ENCODE measurements at regions of chr3 and their contacts with region 1.

Region 1: GRCh38 chr3:10417849-10418248 is 87.5 kb downstream of the ATP2B2 start:
- DNase-seq: no peak
- H3K4me3 ChIP-seq: no peak overlapping the region
- H3K27ac ChIP-seq: no peak overlapping the region
- H3K4me1 ChIP-seq: no peaks in the 10 kb centered on the region
- H3K27me3 ChIP-seq: no peaks in the 10 kb centered on the region
- CTCF ChIP-seq: peak in 2 of 3 experiments; percentile 39 to 41; a peak in 3 of 4 replicates
- EP300 ChIP-seq: no peak
- POLR2A ChIP-seq: no peak
- RAD21 ChIP-seq: peak; percentile 62 to 66

Region 2: DNA sequence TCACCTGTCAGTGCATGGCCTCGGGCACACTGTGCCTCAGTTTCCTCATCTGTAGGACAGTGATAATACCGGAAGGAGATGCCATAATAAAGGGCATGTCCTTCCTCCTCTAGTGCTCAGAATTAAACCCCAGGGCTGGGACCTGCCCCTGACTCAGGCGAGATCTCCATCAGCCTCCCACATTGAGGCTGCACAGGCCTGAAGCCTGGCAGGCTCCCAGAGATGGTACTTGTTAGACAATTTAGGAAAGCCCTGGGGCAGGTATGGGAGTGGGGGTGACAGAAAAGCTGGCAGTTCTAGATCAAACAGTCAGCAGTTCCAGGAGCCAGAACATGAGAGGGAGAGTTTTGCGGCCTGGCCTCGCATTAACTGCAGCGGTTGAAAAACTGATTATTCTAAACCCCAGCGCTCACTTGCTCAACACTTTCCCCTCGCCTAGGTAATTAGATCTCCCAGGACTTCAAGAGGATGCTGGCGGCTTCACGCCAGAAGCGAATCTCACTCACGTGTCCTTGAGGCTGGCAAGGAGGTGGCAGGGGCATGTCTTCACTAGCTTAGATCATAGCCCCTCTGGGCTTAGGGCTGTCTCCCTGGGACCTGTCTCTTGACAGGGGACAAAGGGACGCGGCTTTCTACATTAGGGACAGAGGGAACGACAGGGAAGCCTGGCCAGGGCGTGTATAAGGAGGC is 14.5 kb after region 1 on chr3:
- CTCF ChIA-PET with region 1: interaction called, 23 read pairs
- POLR2A ChIA-PET with region 1: no interaction called
- DNase-seq: no peak
- H3K4me3 ChIP-seq: no peak overlapping the region
- H3K27ac ChIP-seq: no peak overlapping the region
- H3K4me1 ChIP-seq: no peaks in the 10 kb centered on the region
- H3K27me3 ChIP-seq: no peaks in the 10 kb centered on the region
- CTCF ChIP-seq: no peak
- EP300 ChIP-seq: no peak
- POLR2A ChIP-seq: no peak
- RAD21 ChIP-seq: no peak

Measured in H1 (cell line).